Naive thymus-derived CD4-positive, alpha-beta T cell (primary cell): ENCODE measurements at regions of chr4 and their contacts with region 1.

Region 1: DNA sequence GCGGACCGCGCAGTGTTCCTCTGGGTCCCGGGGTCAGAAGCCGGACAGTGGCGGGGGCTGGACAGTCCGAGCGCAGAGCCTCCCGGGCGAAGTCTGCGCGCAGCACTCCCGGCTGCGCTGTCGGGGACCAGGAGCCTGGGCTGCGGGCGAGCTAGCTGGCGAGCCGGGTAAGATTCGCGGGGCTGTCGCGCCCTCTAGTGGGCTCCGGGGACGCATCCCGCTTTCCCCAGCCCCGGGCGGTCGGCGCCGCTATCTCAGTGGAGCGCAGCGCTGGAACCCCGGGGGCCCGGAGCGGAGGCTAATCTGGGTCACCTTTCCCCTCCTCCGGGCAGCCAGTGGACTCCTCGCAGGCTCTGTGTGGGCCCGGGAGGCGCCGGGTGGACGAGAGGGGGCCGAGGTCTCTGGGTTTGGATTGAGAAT is 4.2 kb downstream of the PDGFRA start:
- DNase-seq: peak; percentile 37 to 82 (median 65)
- ATAC-seq: peak; percentile 88
- H3K4me3 ChIP-seq: peak overlapping the region; percentile 50
- H3K4me3 Mint-ChIP-seq: peak overlapping the region; percentile 52 to 87 (median 84)
- H3K27ac ChIP-seq: no peak overlapping the region
- H3K27ac Mint-ChIP-seq: no peak overlapping the region
- H3K4me1 ChIP-seq: peaks cover 0 to 7% of the 10 kb centered on the region in 2 donors
- H3K4me1 Mint-ChIP-seq: peaks cover 11 to 32% (median 21%) of the 10 kb centered on the region in 7 donors
- H3K27me3 ChIP-seq: peaks cover 0 to 4% of the 10 kb centered on the region in 2 donors
- H3K27me3 Mint-ChIP-seq: peaks cover 27 to 70% (median 63%) of the 10 kb centered on the region in 5 donors

Region 2: DNA sequence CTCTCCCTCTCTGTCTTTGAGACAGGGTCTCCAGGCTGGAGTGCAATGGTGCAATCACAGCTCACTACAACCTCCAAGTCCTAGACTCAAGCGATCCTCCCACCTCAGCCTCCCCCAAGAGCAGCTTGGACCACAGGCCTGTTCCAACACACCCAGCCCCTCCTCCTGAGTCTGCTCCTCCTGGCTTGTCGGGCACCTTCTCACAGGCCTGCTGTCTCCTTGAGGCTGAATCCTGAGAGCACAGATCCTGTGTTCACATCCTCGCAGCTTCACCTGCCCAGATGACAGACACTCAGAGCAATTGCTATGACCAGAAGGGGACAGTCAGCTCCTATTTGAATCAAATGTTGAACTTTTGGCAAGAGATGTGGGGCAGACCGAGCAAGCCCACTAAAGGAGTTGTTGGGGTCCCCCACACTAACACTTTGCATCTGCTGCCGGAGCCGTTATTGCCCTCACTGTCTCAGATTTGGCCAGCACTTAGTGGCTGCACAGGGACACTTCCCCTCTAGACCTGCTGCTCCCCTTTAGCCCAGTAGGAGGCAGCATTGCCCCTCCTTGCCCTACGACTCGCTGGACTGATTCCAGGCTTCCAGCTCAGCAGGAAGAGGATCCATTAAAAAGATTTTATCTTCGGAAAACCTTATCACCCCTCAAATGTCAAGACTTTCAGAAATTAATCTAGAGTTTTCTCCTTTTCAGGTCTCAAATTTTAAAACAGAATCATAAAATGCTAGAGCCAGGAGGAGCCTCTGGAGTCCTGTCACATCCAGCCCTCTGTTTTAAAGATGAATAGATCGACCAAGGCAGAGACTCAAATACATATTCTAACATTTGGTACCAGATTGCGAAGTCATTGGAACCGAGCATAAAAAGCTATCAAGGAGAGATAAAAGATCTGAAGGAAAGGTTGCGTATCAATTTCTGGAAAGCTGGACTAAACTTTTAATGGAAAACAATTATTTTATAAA is 1687.9 kb before region 1 on chr4:
- CTCF ChIA-PET with region 1: no interaction called
- POLR2A ChIA-PET with region 1: no interaction called
- intact Hi-C with region 1: loop called in 1 of 2 experiments (anchors 5 kb)
- DNase-seq: peak; percentile 2 to 63 (median 26)
- ATAC-seq: peak; percentile 75
- H3K4me3 ChIP-seq: no peak overlapping the region
- H3K4me3 Mint-ChIP-seq: no peak overlapping the region
- H3K27ac ChIP-seq: no peak overlapping the region
- H3K27ac Mint-ChIP-seq: no peak overlapping the region
- H3K4me1 ChIP-seq: no peaks in the 10 kb centered on the region
- H3K4me1 Mint-ChIP-seq: no peaks in the 10 kb centered on the region
- H3K27me3 ChIP-seq: no peaks in the 10 kb centered on the region
- H3K27me3 Mint-ChIP-seq: peaks cover 5 to 24% (median 6%) of the 10 kb centered on the region in 5 donors

Region 3: GRCh38 chr4:53196882-53197771 is 1036.2 kb before region 1 on chr4:
- CTCF ChIA-PET with region 1: interaction called, 17 read pairs
- POLR2A ChIA-PET with region 1: no interaction called
- intact Hi-C with region 1: loop called (anchors 1 kb)
- DNase-seq: peak in 7 of 9 donors; percentile 13 to 60 (median 53)
- ATAC-seq: peak; percentile 61
- H3K4me3 ChIP-seq: no peak overlapping the region
- H3K4me3 Mint-ChIP-seq: no peak overlapping the region
- H3K27ac ChIP-seq: no peak overlapping the region
- H3K27ac Mint-ChIP-seq: peak overlapping the region in 1 of 9 donors; percentile 62
- H3K4me1 ChIP-seq: no peaks in the 10 kb centered on the region
- H3K4me1 Mint-ChIP-seq: no peaks in the 10 kb centered on the region
- H3K27me3 ChIP-seq: no peaks in the 10 kb centered on the region
- H3K27me3 Mint-ChIP-seq: no peaks in the 10 kb centered on the region

Region 4: GRCh38 chr4:53377319-53378170 is 855.7 kb before region 1 on chr4 and contains the start of gene FIP1L1:
- CTCF ChIA-PET with region 1: no interaction called
- POLR2A ChIA-PET with region 1: no interaction called
- intact Hi-C with region 1: loop called in 1 of 2 experiments (anchors 5 kb)
- DNase-seq: peak; percentile 92 to 97 (median 96)
- ATAC-seq: peak; percentile 97
- H3K4me3 ChIP-seq: peak within 1 kb of the TSS; percentile 85
- H3K4me3 Mint-ChIP-seq: peak within 1 kb of the TSS; percentile 94 to 100 (median 99)
- H3K27ac ChIP-seq: peak within 1 kb of the TSS; percentile 89
- H3K27ac Mint-ChIP-seq: peak within 1 kb of the TSS; percentile 97 to 100 (median 99)
- H3K4me1 ChIP-seq: peaks cover 17 to 21% of the 10 kb centered on the region in 2 donors
- H3K4me1 Mint-ChIP-seq: peaks cover 20 to 53% (median 37%) of the 10 kb centered on the region in 7 donors
- H3K27me3 ChIP-seq: no peaks in the 10 kb centered on the region
- H3K27me3 Mint-ChIP-seq: peaks cover 0 to 15% (median 4%) of the 10 kb centered on the region in 5 donors
- total RNA-seq, gene FIP1L1: 57.1 to 91.0 (median 78.7) TPM

Region 5: DNA sequence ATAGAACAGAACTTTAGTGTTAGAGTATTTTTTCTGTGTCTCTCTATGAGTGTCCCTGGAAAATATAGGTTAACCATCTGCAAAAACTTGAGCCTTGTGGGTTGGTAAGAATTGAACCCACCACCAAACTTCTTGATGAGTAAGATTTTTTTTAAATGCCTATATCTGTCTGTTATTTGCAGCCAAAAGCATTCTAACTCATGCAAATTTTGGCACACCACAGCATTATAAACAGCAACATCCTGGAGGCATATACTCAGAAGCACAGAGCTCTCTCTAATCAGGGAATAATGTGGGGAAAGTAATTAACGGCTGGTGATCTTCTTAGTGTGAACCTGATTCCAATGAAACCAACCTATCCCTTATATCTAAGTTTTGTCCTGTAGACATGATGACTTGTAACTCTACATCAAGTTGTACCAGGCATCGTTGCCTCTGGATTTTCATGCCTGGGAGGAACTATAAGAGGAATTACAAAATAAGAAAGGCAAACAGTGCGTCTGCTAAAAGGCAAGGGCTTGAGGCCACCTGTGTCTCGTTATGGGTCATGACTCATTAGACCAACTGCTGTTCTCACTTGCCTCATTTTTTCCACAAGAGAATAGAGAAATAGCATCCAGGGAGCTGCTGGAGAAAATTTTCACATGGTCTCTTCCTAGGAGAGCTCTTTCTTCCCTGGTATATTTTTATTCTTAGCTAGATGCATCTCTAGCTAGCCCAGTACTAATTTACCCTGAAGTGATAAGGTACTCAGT is 371.3 kb before region 1 on chr4:
- CTCF ChIA-PET with region 1: no interaction called
- POLR2A ChIA-PET with region 1: no interaction called
- intact Hi-C with region 1: no loop called
- DNase-seq: no peak
- ATAC-seq: no peak
- H3K4me3 ChIP-seq: no peak overlapping the region
- H3K4me3 Mint-ChIP-seq: no peak overlapping the region
- H3K27ac ChIP-seq: no peak overlapping the region
- H3K27ac Mint-ChIP-seq: no peak overlapping the region
- H3K4me1 ChIP-seq: no peaks in the 10 kb centered on the region
- H3K4me1 Mint-ChIP-seq: no peaks in the 10 kb centered on the region
- H3K27me3 ChIP-seq: no peaks in the 10 kb centered on the region
- H3K27me3 Mint-ChIP-seq: peaks cover 0 to 9% (median 3%) of the 10 kb centered on the region in 5 donors

Region 6: DNA sequence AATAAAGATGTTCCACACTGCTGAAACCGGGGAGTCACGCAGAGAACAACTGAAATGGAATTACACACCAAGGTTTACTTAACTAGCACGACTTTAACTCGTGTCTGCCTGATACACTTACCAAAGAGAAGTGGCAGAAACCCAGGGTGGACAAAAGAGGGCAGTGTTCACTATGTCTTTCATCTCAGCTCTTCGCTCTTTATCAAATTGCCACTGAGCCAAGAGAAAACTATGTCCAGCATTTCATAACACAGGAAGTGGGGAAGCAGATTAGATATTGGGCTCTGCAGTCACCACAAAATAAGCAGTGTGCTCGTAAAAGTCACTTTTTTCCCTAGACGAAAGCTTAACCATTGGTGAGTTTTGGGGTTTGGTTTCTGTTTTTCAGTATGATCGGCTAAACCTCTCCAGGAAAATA is 324.6 kb before region 1 on chr4:
- CTCF ChIA-PET with region 1: interaction called, 9 read pairs
- POLR2A ChIA-PET with region 1: interaction called, 3 read pairs
- intact Hi-C with region 1: loop called (anchors 1 kb)
- DNase-seq: peak in 4 of 9 donors; percentile 6 to 28 (median 18)
- ATAC-seq: peak; percentile 82
- H3K4me3 ChIP-seq: no peak overlapping the region
- H3K4me3 Mint-ChIP-seq: peak overlapping the region in 4 of 10 donors; percentile 9 to 45 (median 30)
- H3K27ac ChIP-seq: no peak overlapping the region
- H3K27ac Mint-ChIP-seq: no peak overlapping the region
- H3K4me1 ChIP-seq: no peaks in the 10 kb centered on the region
- H3K4me1 Mint-ChIP-seq: peaks cover 0 to 20% (median 12%) of the 10 kb centered on the region in 7 donors
- H3K27me3 ChIP-seq: no peaks in the 10 kb centered on the region
- H3K27me3 Mint-ChIP-seq: peaks cover 32 to 60% (median 48%) of the 10 kb centered on the region in 5 donors

Region 7: DNA sequence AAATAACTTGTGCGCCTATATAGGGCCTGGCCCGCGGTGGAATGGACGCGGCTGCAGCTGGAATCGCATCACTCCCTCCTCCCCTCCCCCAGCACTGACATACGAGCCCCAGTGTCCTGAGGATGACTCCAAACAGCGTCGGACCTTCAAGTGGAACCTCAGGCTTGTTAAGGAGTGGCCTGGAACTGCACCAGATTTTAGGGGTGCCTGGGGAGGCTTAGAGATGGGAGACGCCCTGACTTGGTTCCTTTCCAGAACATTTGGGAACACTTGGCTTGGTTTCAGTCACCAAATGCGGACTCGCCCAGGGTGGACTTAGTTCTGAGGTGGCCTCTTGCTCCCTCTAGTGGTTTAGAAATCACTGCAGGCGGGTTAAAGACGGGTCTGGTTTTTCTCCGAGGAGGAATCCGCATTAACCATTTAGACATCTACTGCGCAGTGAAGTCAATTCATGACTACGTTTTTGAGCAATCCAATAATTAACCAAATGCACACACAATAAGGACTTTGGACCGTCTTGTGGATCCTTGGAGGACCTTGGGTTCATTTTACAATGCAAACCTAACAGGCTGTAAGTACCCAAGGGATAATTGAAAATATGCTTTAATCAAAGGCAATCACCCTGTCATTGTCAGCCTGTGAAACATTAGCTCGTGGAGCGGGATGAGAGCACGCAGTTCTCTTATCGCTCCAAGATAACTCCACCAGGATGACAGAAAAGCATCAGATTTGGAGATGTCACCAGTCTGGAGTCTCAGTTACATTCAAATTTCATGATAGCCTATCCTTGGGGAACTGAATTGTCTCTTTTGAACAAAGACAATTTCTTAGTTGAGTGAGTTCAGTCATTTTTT is 15.4 kb before region 1 on chr4:
- CTCF ChIA-PET with region 1: interaction called, 3 read pairs
- POLR2A ChIA-PET with region 1: no interaction called
- intact Hi-C with region 1: loop called in 1 of 2 experiments (anchors 1 kb)
- DNase-seq: peak in 8 of 9 donors; percentile 35 to 73 (median 58)
- ATAC-seq: peak; percentile 83
- H3K4me3 ChIP-seq: no peak overlapping the region
- H3K4me3 Mint-ChIP-seq: peak overlapping the region in 8 of 10 donors; percentile 29 to 56 (median 50)
- H3K27ac ChIP-seq: no peak overlapping the region
- H3K27ac Mint-ChIP-seq: no peak overlapping the region
- H3K4me1 ChIP-seq: peaks cover 0 to 5% of the 10 kb centered on the region in 2 donors
- H3K4me1 Mint-ChIP-seq: peaks cover 0 to 7% (median 5%) of the 10 kb centered on the region in 7 donors
- H3K27me3 ChIP-seq: peaks cover 0 to 3% of the 10 kb centered on the region in 2 donors
- H3K27me3 Mint-ChIP-seq: peaks cover 27 to 60% (median 43%) of the 10 kb centered on the region in 5 donors

Region 8: GRCh38 chr4:55754754-55755350 is 1521.6 kb after region 1 on chr4:
- CTCF ChIA-PET with region 1: no interaction called
- POLR2A ChIA-PET with region 1: no interaction called
- intact Hi-C with region 1: no loop called
- DNase-seq: no peak
- ATAC-seq: no peak
- H3K4me3 ChIP-seq: no peak overlapping the region
- H3K4me3 Mint-ChIP-seq: no peak overlapping the region
- H3K27ac ChIP-seq: no peak overlapping the region
- H3K27ac Mint-ChIP-seq: no peak overlapping the region
- H3K4me1 ChIP-seq: no peaks in the 10 kb centered on the region
- H3K4me1 Mint-ChIP-seq: peaks cover 0 to 4% (median 0%) of the 10 kb centered on the region in 7 donors
- H3K27me3 ChIP-seq: no peaks in the 10 kb centered on the region
- H3K27me3 Mint-ChIP-seq: peaks cover 0 to 5% (median 0%) of the 10 kb centered on the region in 5 donors